ENCODE measurements at regions of chr20 and their contacts with region 1.

Region 1: GRCh38 chr20:37192137-37192854 is 12.9 kb upstream of the MROH8 start:
- DNase-seq: peak; percentile 81
- H3K4me3 Mint-ChIP-seq: no peak overlapping the region
- H3K27ac Mint-ChIP-seq: peak overlapping the region; percentile 51
- H3K4me1 Mint-ChIP-seq: peaks cover 75% of the 10 kb centered on the region
- H3K27me3 Mint-ChIP-seq: no peaks in the 10 kb centered on the region

Region 2: GRCh38 chr20:36632487-36633284 is 559.6 kb before region 1 on chr20:
- CTCF ChIA-PET with region 1: no interaction called
- intact Hi-C with region 1: no loop called
- DNase-seq: no peak
- H3K4me3 Mint-ChIP-seq: no peak overlapping the region
- H3K27ac Mint-ChIP-seq: peak overlapping the region; percentile 50
- H3K4me1 Mint-ChIP-seq: peaks cover 31% of the 10 kb centered on the region
- H3K27me3 Mint-ChIP-seq: no peaks in the 10 kb centered on the region

Region 3: DNA sequence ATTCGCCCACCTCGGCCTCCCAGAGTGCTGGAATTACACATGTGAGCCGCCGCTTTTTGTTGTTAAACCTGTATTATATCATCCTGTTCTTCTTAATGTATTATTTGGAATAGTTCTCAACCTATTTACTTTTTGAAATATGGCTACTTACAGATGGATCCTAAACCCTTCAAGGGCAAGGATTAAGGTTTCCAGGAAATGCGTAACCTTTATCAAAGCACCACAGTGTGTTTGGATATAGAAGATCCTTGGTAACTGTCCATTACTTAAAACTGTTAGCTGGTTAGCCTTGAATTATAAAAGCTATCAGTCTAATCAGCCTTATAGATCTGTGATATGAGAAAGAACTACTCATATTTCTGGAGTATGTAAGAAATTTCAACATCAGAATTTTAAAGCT is 25.4 kb before region 1 on chr20:
- CTCF ChIA-PET with region 1: interaction called, 11 read pairs
- intact Hi-C with region 1: no loop called
- DNase-seq: no peak
- H3K4me3 Mint-ChIP-seq: no peak overlapping the region
- H3K27ac Mint-ChIP-seq: no peak overlapping the region
- H3K4me1 Mint-ChIP-seq: no peaks in the 10 kb centered on the region
- H3K27me3 Mint-ChIP-seq: no peaks in the 10 kb centered on the region

Region 4: DNA sequence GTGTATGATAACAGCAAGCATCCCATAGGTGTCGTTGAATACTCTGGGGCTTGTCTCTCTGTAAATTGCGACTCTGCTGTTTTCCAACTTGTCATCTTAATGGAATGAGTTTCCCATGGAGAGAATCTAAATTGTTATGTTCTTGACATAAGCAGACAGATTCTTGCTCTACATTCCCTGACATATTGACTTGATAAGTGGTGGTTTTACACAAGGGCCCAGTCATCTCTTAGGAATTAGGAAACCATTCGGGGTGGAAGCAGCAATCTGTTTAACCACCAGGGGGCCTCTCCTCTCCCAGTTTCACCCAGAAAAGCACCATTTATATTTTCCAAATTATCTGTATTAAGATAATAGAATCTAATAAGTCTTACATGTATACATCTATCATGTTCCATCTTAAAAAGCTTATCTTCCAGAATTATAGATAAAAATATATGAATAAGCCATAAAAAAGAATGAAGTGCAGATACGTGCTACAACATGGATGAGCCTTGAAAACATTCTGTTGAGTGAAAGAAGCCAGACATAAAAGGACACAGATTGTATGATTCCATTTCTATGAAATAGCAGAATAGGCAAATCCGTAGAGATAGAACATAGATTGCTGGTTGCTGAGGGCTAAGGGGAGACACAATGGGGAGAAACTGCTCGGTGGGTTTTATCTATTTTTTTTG is 10.1 kb after region 1 on chr20:
- CTCF ChIA-PET with region 1: interaction called, 14 read pairs
- intact Hi-C with region 1: no loop called
- DNase-seq: peak; percentile 37
- H3K4me3 Mint-ChIP-seq: no peak overlapping the region
- H3K27ac Mint-ChIP-seq: no peak overlapping the region
- H3K4me1 Mint-ChIP-seq: no peaks in the 10 kb centered on the region
- H3K27me3 Mint-ChIP-seq: no peaks in the 10 kb centered on the region

Region 5: GRCh38 chr20:37384683-37385174 is 192.4 kb after region 1 on chr20:
- CTCF ChIA-PET with region 1: interaction called, 4 read pairs
- intact Hi-C with region 1: loop called (anchors 1 kb)
- DNase-seq: peak; percentile 78
- H3K4me3 Mint-ChIP-seq: peak overlapping the region; percentile 65
- H3K27ac Mint-ChIP-seq: no peak overlapping the region
- H3K4me1 Mint-ChIP-seq: peaks cover 8% of the 10 kb centered on the region
- H3K27me3 Mint-ChIP-seq: peaks cover 4% of the 10 kb centered on the region

Region 6: DNA sequence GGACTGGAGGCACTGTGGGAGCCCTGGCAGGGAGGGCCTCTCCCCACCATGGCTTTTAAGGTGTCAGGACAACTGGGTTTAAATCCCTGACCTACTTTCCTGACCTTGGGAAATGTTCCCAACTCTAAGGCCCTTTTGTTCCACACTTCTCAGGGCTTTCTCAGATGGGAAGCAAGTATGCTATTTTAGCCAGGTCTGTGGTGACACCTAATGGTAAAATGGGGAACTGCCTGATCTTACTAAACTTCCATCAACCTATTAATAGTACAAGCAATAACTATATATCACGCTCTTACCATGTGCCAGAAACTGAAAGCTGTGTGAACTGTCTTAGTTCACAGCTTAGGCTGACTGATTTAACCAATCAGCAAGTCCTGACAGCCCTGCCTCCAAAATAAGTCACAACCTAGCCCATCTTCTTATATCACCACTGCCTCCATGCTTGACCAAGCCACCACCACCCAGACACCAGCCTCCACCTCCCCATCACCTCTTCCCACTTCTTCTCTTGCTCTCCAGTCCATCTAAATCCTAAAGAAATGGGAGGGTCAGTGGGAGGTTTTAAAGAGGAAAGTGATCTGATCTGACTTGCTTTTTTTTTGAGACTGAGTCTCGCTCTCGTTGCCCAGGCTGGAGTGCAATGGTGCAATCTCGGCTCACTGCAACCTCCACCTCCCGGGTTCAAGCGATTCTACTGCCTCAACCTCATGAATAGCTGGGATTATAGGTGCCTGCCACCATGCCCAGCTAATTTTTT is 342.3 kb after region 1 on chr20:
- CTCF ChIA-PET with region 1: interaction called, 5 read pairs
- intact Hi-C with region 1: loop called (anchors 1 kb)
- DNase-seq: peak; percentile 60
- H3K4me3 Mint-ChIP-seq: no peak overlapping the region
- H3K27ac Mint-ChIP-seq: no peak overlapping the region
- H3K4me1 Mint-ChIP-seq: peaks cover 4% of the 10 kb centered on the region
- H3K27me3 Mint-ChIP-seq: no peaks in the 10 kb centered on the region

Measured in activated naive CD4-positive, alpha-beta T cell treated with anti-CD3 and anti-CD28 coated beads for 36 hours (primary cell).